ENCODE measurements at regions of chr3 and their contacts with region 1.

Region 1: GRCh38 chr3:98778852-98779413 is 15.8 kb downstream of the ST3GAL6 start:
- DNase-seq: no peak
- H3K4me3 ChIP-seq: no peak overlapping the region
- H3K27ac ChIP-seq: peak overlapping the region; percentile 76 to 77
- H3K4me1 ChIP-seq: peaks cover 13 to 60% of the 10 kb centered on the region in 2 donors
- H3K27me3 ChIP-seq: no peaks in the 10 kb centered on the region
- CTCF ChIP-seq: no peak

Region 2: DNA sequence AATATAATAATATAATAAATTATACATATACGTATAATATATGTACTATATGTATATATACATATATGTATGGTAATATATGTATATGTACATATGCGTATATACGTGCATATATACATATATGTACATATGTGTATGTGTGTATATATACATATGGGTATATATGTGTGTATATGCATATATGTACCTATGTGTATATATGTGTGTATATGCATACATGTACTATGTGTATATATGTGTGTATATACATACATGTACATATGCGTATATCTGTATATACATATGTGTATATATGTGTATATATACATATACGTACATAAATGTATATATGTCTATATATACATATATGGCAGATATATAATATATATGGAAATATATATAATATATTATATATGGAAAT is 90.6 kb before region 1 on chr3:
- intact Hi-C with region 1: loop called (anchors 5 kb)
- DNase-seq: no peak
- H3K4me3 ChIP-seq: no peak overlapping the region
- H3K27ac ChIP-seq: no peak overlapping the region
- H3K4me1 ChIP-seq: no peaks in the 10 kb centered on the region
- H3K27me3 ChIP-seq: no peaks in the 10 kb centered on the region
- CTCF ChIP-seq: no peak

Measured in ascending aorta (tissue), 2 donors.